HepG2 (cell line): ENCODE measurements at regions of chr5 and their contacts with region 1.

Region 1: DNA sequence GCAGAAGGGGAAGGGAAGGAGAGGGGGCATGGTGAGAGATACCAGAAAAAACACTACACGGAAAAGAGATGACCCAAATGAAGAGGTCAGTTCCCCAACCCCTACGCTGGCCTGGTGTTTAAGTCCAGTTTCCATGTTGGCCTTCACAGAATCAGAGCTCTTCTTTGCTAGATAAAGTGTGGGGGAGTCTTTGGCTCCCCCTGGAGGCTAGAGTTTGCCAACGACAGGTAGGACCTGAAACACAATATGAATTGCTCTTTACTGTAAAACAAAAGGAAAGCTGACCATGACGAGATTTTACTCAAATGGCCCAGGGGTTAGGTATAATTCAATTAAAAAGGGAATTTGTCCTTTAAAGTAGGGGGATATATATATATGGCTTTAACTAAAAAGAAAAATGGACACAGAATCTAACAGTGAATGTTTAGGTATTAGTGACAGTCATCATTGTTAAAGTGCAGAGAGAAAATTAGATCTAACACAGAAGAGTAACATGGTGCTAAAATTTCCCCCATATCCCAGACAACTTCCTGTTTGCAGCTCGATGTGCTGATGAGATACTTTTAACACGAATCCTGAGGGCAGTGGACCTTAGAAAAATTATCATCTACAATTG is 92.0 kb downstream of the SV2C start:
- DNase-seq: peak; percentile 48
- ATAC-seq: peak; percentile 87
- H3K4me3 ChIP-seq: no peak overlapping the region
- H3K27ac ChIP-seq: no peak overlapping the region
- H3K4me1 ChIP-seq: no peaks in the 10 kb centered on the region
- H3K27me3 ChIP-seq: peaks cover 0 to 3% of the 10 kb centered on the region in 2 experiments; a peak in 1 of 5 replicates
- CTCF ChIP-seq: peak; percentile 74
- EP300 ChIP-seq: no peak
- POLR2A ChIP-seq: no peak
- RAD21 ChIP-seq: peak; percentile 34; the same call in 1 of the 2 replicates

Region 2: GRCh38 chr5:75734913-75735789 is 440.0 kb before region 1 on chr5:
- CTCF ChIA-PET with region 1: interaction called, 6 read pairs
- POLR2A ChIA-PET with region 1: no interaction called
- in situ Hi-C with region 1: loop called (anchors 5 kb)
- intact Hi-C with region 1: no loop called
- DNase-seq: peak; percentile 43
- ATAC-seq: peak; percentile 99
- H3K4me3 ChIP-seq: no peak overlapping the region
- H3K27ac ChIP-seq: no peak overlapping the region
- H3K4me1 ChIP-seq: 0 out of 2 replicates have a peak, but pooled peaks cover 5% of the 10 kb centered on the region
- H3K27me3 ChIP-seq: no peaks in the 10 kb centered on the region
- CTCF ChIP-seq: peak; percentile 82
- EP300 ChIP-seq: no peak
- POLR2A ChIP-seq: no peak
- RAD21 ChIP-seq: peak; percentile 21; the same call in 1 of the 2 replicates

Region 3: DNA sequence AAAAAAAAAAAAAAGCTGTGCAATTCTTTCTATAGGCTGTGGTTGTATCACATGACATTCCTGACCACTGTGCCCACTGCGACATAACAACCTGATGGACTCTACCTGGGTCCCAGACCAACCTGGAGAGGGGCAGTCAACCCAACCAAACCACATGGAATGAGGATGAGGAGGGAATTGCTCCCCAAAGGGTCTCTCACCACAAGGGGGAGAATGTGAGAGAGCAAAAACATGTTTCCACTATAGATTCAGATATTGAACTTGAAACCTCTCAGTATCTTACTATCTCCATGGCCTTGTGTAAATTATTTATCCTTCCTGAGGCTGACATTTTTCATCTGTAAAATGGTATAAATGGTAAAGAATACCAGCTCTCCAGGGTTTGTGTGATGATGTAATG is 158.9 kb before region 1 on chr5:
- CTCF ChIA-PET with region 1: no interaction called
- POLR2A ChIA-PET with region 1: no interaction called
- in situ Hi-C with region 1: no loop called
- intact Hi-C with region 1: loop called (anchors 1 kb)
- DNase-seq: no peak
- ATAC-seq: no peak
- H3K4me3 ChIP-seq: no peak overlapping the region
- H3K27ac ChIP-seq: no peak overlapping the region
- H3K4me1 ChIP-seq: no peaks in the 10 kb centered on the region
- H3K27me3 ChIP-seq: peaks cover 0 to 5% of the 10 kb centered on the region in 2 experiments; a peak in 1 of 5 replicates
- CTCF ChIP-seq: 0 out of 2 replicates have a peak, but pooled peaks have one; percentile 17
- EP300 ChIP-seq: no peak
- POLR2A ChIP-seq: no peak
- RAD21 ChIP-seq: no peak

Region 4: GRCh38 chr5:76041863-76042262 is 133.3 kb before region 1 on chr5:
- CTCF ChIA-PET with region 1: no interaction called
- POLR2A ChIA-PET with region 1: no interaction called
- in situ Hi-C with region 1: no loop called
- intact Hi-C with region 1: no loop called
- DNase-seq: no peak
- ATAC-seq: peak; percentile 60; the same call in 1 of the 3 replicates
- H3K4me3 ChIP-seq: no peak overlapping the region
- H3K27ac ChIP-seq: no peak overlapping the region
- H3K4me1 ChIP-seq: no peaks in the 10 kb centered on the region
- H3K27me3 ChIP-seq: no peaks in the 10 kb centered on the region
- CTCF ChIP-seq: no peak
- EP300 ChIP-seq: no peak
- POLR2A ChIP-seq: no peak
- RAD21 ChIP-seq: no peak